K562 (cell line): ENCODE measurements at regions of chrX and their contacts with region 1.

Region 1: GRCh38 chrX:16670998-16671397 is 21.0 kb downstream of the S100G start:
- DNase-seq: peak; percentile 42 to 59 (median 48)
- ATAC-seq: peak; percentile 86
- H3K4me3 ChIP-seq: no peak overlapping the region
- H3K27ac ChIP-seq: no peak overlapping the region
- H3K4me1 ChIP-seq: no peaks in the 10 kb centered on the region
- H3K27me3 ChIP-seq: no peaks in the 10 kb centered on the region
- CTCF ChIP-seq: peak; percentile 40 to 68 (median 47); a peak in 4 of 6 replicates
- EP300 ChIP-seq: no peak
- POLR2A ChIP-seq: no peak
- RAD21 ChIP-seq: peak; percentile 70

Region 2: DNA sequence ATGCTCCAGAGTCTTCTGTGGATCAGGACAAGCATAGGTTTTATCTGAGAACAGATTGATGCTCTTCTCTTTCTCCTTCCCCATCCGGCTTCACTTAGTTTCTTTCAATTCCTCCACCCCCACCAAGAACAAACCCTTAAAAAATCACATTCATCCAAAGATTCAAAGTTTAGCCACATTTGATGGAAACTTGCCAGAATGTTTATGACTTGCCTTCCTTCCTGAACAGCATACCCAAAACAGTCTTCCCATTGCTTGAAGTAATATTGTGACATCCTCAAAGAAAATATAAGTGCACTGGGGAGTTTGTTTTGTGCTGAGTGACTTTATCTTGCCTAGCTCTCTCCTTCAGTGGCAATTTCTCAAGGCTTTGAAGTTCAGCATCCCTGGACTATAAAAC is 420.7 kb before region 1 on chrX:
- CTCF ChIA-PET with region 1: no interaction called
- POLR2A ChIA-PET with region 1: no interaction called
- in situ Hi-C with region 1: loop called (anchors 25 kb)
- intact Hi-C with region 1: no loop called
- DNase-seq: no peak
- ATAC-seq: no peak
- H3K4me3 ChIP-seq: no peak overlapping the region
- H3K27ac ChIP-seq: no peak overlapping the region
- H3K4me1 ChIP-seq: no peaks in the 10 kb centered on the region; a peak in 1 of 5 replicates
- H3K27me3 ChIP-seq: no peaks in the 10 kb centered on the region
- CTCF ChIP-seq: no peak
- EP300 ChIP-seq: no peak
- POLR2A ChIP-seq: no peak
- RAD21 ChIP-seq: no peak

Region 3: DNA sequence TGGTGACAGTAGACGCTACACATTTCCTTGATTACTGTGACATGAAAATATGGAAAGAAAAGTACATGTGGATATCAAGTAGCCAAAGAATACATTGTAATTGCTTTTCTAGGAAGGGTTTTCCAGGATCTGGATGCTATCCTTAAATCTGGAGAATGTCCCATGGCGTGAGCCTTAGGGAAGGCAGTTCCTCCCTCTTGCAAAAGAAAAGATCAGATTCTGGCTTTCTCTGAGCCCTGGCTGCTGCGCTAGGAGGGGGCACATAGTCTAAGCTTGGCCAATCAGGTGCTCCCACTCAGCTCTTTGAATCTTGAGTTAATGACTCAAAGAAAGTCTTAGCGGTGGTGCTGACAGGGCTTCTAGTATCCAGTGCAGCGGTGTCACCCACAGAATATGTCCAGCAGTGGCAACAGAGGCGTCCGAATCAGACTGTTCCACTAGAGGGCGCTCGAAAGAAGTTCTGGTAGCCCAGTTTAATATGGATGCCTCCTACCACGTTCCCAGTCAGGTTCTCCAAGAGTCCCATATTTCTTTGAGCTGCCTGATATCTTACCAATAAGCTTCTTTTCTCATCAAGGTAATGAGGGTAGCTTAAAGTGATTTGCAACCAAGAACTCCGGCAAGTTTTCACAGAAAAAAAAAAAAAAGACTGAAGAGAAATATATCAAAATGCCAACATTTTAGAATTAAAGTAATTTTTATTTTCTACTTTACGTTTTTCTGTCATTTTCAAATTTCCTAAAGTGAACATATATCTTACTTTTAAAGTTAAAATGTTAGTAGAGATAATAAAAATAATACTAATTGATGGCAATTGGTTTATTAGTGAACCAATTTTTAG is 234.4 kb before region 1 on chrX:
- CTCF ChIA-PET with region 1: interaction called, 3 read pairs
- POLR2A ChIA-PET with region 1: no interaction called
- in situ Hi-C with region 1: loop called (anchors 25 kb)
- intact Hi-C with region 1: loop called (anchors 2 kb)
- DNase-seq: peak; percentile 48 to 79 (median 62)
- ATAC-seq: peak; percentile 100
- H3K4me3 ChIP-seq: no peak overlapping the region
- H3K27ac ChIP-seq: no peak overlapping the region
- H3K4me1 ChIP-seq: no peaks in the 10 kb centered on the region
- H3K27me3 ChIP-seq: no peaks in the 10 kb centered on the region
- CTCF ChIP-seq: peak; percentile 69 to 81 (median 74)
- EP300 ChIP-seq: no peak
- POLR2A ChIP-seq: no peak
- RAD21 ChIP-seq: peak; percentile 38 to 63; a peak in 3 of 4 replicates

Region 4: DNA sequence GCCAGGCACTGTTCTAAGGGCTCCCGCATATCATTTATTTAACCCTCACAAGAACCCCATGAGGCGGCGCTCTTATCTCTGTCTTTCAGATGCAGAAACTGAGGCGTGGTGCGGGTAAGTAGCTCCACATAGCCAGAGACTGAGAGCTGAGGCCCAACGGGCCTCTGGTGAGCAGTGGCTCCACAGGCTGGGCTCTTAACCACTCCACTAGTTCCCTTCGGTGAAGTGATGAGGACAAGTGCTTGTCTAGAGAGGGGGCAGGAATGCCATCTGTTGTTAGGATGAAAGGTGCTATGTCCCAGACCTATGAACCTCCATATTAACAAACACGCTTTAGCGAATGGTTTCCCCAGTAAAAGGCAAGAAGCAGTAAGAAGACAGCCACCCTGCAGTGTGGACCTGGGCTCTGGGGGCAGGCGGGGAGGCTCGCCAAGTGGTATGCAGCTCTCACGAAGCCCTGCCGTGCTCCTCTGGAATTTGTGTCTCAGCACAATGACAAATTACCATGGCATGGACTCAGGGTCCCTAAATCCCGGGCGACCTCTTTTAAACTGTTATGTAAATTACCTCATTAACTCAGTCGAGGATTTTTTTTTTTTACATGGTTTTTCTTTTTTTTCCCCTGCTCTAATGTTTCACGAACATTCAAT is 41.9 kb before region 1 on chrX:
- CTCF ChIA-PET with region 1: no interaction called
- POLR2A ChIA-PET with region 1: no interaction called
- in situ Hi-C with region 1: no loop called
- intact Hi-C with region 1: loop called (anchors 2 kb)
- DNase-seq: peak; percentile 49 to 84 (median 56)
- ATAC-seq: peak; percentile 89
- H3K4me3 ChIP-seq: no peak overlapping the region
- H3K27ac ChIP-seq: peak overlapping the region; percentile 69
- H3K4me1 ChIP-seq: peaks cover 10 to 21% of the 10 kb centered on the region in 2 experiments; a peak in 4 of 5 replicates
- H3K27me3 ChIP-seq: no peaks in the 10 kb centered on the region
- CTCF ChIP-seq: peak; percentile 24 to 43 (median 27); a peak in 1 of 6 replicates
- EP300 ChIP-seq: no peak
- POLR2A ChIP-seq: no peak
- RAD21 ChIP-seq: peak in 1 of 2 experiments; percentile 48; a peak in 2 of 4 replicates

Region 5: GRCh38 chrX:16658284-16658683 is 12.7 kb before region 1 on chrX:
- CTCF ChIA-PET with region 1: no interaction called
- POLR2A ChIA-PET with region 1: no interaction called
- in situ Hi-C with region 1: no loop called
- intact Hi-C with region 1: no loop called
- DNase-seq: no peak
- ATAC-seq: no peak
- H3K4me3 ChIP-seq: no peak overlapping the region
- H3K27ac ChIP-seq: no peak overlapping the region
- H3K4me1 ChIP-seq: no peaks in the 10 kb centered on the region
- H3K27me3 ChIP-seq: no peaks in the 10 kb centered on the region
- CTCF ChIP-seq: no peak
- EP300 ChIP-seq: no peak
- POLR2A ChIP-seq: no peak
- RAD21 ChIP-seq: no peak

Region 6: GRCh38 chrX:16702700-16703599 is 32.0 kb after region 1 on chrX:
- CTCF ChIA-PET with region 1: no interaction called
- POLR2A ChIA-PET with region 1: no interaction called
- in situ Hi-C with region 1: no loop called
- intact Hi-C with region 1: no loop called
- DNase-seq: no peak
- ATAC-seq: no peak
- H3K4me3 ChIP-seq: no peak overlapping the region
- H3K27ac ChIP-seq: no peak overlapping the region
- H3K4me1 ChIP-seq: no peaks in the 10 kb centered on the region
- H3K27me3 ChIP-seq: no peaks in the 10 kb centered on the region
- CTCF ChIP-seq: no peak
- EP300 ChIP-seq: no peak
- POLR2A ChIP-seq: no peak
- RAD21 ChIP-seq: no peak